PC-3 (cell line): ENCODE measurements at regions of chr6 and their contacts with region 1.

Region 1: DNA sequence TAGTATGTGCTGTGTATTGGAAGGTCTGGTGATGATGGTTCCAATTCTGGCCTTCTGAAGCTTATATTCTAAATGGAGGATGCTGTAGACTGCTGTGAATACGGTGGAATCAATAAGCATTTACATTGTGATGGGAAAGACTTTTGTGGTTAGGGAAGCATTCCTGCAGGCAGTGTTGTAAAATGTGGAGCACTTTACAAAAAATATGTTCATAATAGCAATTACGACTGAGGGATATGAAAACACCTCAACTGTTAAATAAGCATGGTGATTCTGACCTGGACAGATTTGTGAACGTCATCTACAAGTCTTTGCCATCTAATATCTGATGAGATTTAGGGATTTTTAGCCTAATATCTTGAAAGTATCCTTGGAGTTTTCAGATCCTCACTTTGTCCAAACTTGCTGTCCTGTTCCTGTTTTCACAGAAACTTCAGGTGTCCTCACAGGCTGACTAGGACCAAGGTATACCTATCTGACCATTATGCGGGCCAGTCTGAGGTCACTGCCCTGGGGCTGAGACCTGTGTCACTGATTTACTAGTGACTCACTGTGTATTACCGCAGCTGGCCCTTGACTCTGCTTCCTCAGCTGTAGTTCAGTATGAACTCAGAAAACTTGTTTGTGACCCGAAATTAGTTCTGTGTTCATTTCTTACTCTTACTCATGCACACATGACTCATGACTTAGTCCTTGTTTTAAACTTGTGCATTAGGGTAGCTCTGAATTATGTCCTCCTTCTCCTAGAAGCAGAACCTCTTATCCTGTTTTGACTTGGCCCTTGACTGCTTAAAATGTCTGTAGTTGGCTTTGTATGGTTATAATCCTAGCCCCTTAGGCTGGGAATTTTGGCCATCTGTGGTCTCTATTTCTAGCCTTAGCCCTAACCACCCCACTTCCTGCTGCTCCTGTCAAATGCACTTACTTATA is 343.0 kb downstream of the CDKAL1 start:
- DNase-seq: peak; percentile 98
- ATAC-seq: peak; percentile 96
- H3K4me3 ChIP-seq: peak overlapping the region; percentile 8; the same call in 1 of the 2 replicates
- H3K27ac ChIP-seq: peak overlapping the region; percentile 88
- H3K4me1 ChIP-seq: peaks cover 45% of the 10 kb centered on the region
- H3K27me3 ChIP-seq: no peaks in the 10 kb centered on the region
- CTCF ChIP-seq: no peak

Region 2: GRCh38 chr6:20564269-20564668 is 313.0 kb before region 1 on chr6:
- CTCF ChIA-PET with region 1: interaction called, 6 read pairs
- POLR2A ChIA-PET with region 1: interaction called, 5 read pairs
- intact Hi-C with region 1: loop called (anchors 2 kb)
- DNase-seq: peak; percentile 67
- ATAC-seq: no peak
- H3K4me3 ChIP-seq: no peak overlapping the region
- H3K27ac ChIP-seq: no peak overlapping the region
- H3K4me1 ChIP-seq: peaks cover 5% of the 10 kb centered on the region
- H3K27me3 ChIP-seq: no peaks in the 10 kb centered on the region
- CTCF ChIP-seq: peak; percentile 78

Region 3: DNA sequence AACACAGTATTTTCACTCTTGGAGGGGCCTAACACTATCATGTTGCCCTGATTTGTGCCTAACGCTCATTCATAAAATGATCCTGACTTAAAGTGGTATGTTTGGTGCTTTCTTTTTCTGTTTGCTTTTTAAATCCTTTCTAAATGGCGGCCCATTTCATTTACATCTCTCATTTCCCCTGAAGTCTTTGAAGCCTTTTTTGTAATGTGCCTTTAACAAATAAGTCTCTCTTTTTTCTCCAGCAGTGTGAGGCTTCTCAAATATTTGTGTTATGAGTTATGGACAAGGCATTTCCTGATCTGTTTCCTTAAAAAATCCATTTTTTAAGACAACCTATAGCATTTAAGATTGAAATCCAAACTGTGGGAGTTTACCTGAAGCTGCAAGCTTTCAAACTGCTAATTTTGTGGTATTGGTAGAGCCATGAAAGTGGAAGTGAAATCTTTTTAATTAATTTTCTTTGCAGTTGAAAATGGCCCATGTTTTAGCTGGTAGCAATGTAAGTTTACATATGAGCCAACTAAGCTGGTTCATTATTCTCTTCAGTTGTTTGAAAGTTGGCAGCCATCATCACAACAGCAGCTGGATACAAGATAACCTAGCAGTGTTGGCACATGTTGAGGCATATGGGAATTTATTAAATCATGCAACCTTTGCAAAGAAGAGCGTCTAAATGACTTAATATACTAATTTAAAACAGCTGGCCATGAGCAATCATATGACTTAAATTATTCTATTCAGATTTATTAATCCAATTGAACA is 126.7 kb after region 1 on chr6:
- CTCF ChIA-PET with region 1: interaction called, 4 read pairs
- POLR2A ChIA-PET with region 1: no interaction called
- intact Hi-C with region 1: loop called (anchors 1 kb)
- DNase-seq: peak; percentile 93
- ATAC-seq: peak; percentile 68
- H3K4me3 ChIP-seq: peak overlapping the region; percentile 34; the same call in 1 of the 2 replicates
- H3K27ac ChIP-seq: peak overlapping the region; percentile 79
- H3K4me1 ChIP-seq: peaks cover 49% of the 10 kb centered on the region
- H3K27me3 ChIP-seq: no peaks in the 10 kb centered on the region
- CTCF ChIP-seq: no peak

Region 4: GRCh38 chr6:21201637-21202350 is 324.5 kb after region 1 on chr6:
- CTCF ChIA-PET with region 1: no interaction called
- POLR2A ChIA-PET with region 1: no interaction called
- intact Hi-C with region 1: loop called (anchors 1 kb)
- DNase-seq: peak; percentile 82
- ATAC-seq: peak; percentile 93
- H3K4me3 ChIP-seq: no peak overlapping the region
- H3K27ac ChIP-seq: no peak overlapping the region
- H3K4me1 ChIP-seq: peaks cover 14% of the 10 kb centered on the region
- H3K27me3 ChIP-seq: no peaks in the 10 kb centered on the region
- CTCF ChIP-seq: no peak

Region 5: GRCh38 chr6:21325201-21325856 is 448.1 kb after region 1 on chr6:
- CTCF ChIA-PET with region 1: no interaction called
- POLR2A ChIA-PET with region 1: no interaction called
- intact Hi-C with region 1: loop called (anchors 5 kb)
- DNase-seq: peak; percentile 59
- ATAC-seq: peak; percentile 89
- H3K4me3 ChIP-seq: no peak overlapping the region
- H3K27ac ChIP-seq: no peak overlapping the region
- H3K4me1 ChIP-seq: peaks cover 9% of the 10 kb centered on the region; the same call in 1 of the 2 replicates
- H3K27me3 ChIP-seq: no peaks in the 10 kb centered on the region
- CTCF ChIP-seq: no peak